HepG2 (cell line): ENCODE measurements at regions of chr4 and their contacts with region 1.

Region 1: DNA sequence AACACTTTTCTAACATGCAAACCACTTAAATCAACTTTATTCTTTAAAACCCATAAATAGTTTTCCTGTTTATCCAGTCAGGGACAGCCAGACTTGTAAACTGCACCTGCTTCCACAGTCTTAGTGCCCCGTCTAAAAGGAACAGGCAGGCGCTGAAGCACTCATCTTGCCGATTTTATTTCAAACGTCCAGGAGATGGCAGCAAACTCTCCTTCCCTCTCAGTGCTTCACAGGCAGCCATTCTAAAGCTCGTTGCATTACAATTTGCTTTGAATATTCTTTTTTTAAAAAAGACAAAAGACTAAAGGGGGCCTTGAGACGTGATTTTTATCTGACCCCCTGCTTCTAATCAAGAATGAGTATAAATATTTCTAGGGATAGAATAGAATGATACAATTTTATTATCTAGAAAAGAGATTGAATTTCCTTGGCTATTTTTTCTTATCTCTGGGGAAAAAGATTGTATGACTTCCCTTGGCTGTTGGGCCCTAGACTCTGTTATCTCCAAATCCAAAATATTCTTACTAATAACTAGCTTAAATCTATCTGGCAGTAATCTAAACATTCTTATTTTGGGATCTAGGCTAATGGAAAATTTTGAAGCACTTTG is 93.6 kb upstream of the MYOZ2 start:
- DNase-seq: peak; percentile 66
- ATAC-seq: peak; percentile 96
- H3K4me3 ChIP-seq: no peak overlapping the region
- H3K27ac ChIP-seq: no peak overlapping the region
- H3K4me1 ChIP-seq: no peaks in the 10 kb centered on the region
- H3K27me3 ChIP-seq: 0 out of 5 replicates have a peak, but pooled peaks cover 0 to 4% of the 10 kb centered on the region in 2 experiments
- CTCF ChIP-seq: peak; percentile 80
- EP300 ChIP-seq: no peak
- POLR2A ChIP-seq: no peak
- RAD21 ChIP-seq: peak; percentile 66

Region 2: DNA sequence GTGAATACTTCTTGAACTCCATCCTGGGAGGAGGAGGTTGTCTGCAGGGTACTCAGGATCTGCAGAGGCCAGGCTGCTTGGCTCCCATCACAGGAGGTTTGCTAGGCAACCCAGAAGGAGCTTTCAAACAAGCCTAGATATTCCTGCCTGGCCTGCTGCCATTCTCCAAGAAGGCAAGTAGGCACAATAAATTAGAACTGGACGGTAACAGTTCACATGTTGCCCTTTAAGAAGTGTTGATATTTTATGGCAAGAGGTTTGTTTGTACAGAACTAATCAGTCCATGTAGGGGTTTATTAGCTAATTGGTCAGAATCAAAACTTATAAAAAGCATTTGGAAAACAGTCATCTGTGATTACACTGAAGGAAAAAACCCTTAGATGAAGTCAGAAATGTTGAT is 114.1 kb before region 1 on chr4:
- CTCF ChIA-PET with region 1: no interaction called
- POLR2A ChIA-PET with region 1: no interaction called
- in situ Hi-C with region 1: no loop called
- intact Hi-C with region 1: no loop called
- DNase-seq: no peak
- ATAC-seq: no peak
- H3K4me3 ChIP-seq: no peak overlapping the region
- H3K27ac ChIP-seq: no peak overlapping the region
- H3K4me1 ChIP-seq: no peaks in the 10 kb centered on the region
- H3K27me3 ChIP-seq: no peaks in the 10 kb centered on the region
- CTCF ChIP-seq: no peak
- EP300 ChIP-seq: no peak
- POLR2A ChIP-seq: no peak
- RAD21 ChIP-seq: no peak

Region 3: DNA sequence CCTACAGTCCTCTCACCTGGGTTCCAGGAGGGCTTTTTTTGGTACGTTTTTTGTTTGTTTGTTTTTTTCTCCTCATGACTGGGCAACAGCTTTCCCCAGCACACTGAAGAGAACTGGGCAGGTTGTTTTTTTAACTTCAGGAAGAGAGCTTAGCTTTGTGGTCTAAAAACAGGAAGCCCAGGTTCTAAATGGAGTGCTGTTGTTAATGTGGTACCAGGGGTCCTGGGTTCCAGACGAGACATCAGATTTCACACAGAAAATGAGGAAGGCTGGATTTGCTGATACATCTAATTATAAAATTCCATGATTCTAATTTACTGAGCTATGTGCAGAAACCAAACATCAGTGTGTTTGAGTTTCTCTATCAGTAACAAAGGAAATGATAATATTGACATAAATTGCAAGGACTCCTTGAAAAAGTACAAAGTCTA is 97.8 kb after region 1 on chr4:
- CTCF ChIA-PET with region 1: no interaction called
- POLR2A ChIA-PET with region 1: no interaction called
- in situ Hi-C with region 1: no loop called
- intact Hi-C with region 1: loop called (anchors 10 kb)
- DNase-seq: no peak
- ATAC-seq: peak; percentile 38
- H3K4me3 ChIP-seq: peak overlapping the region in 2 of 3 experiments; percentile 8 to 18; a peak in 2 of 6 replicates
- H3K27ac ChIP-seq: no peak overlapping the region
- H3K4me1 ChIP-seq: peaks cover 26% of the 10 kb centered on the region
- H3K27me3 ChIP-seq: no peaks in the 10 kb centered on the region
- CTCF ChIP-seq: no peak
- EP300 ChIP-seq: no peak
- POLR2A ChIP-seq: no peak
- RAD21 ChIP-seq: no peak

Region 4: DNA sequence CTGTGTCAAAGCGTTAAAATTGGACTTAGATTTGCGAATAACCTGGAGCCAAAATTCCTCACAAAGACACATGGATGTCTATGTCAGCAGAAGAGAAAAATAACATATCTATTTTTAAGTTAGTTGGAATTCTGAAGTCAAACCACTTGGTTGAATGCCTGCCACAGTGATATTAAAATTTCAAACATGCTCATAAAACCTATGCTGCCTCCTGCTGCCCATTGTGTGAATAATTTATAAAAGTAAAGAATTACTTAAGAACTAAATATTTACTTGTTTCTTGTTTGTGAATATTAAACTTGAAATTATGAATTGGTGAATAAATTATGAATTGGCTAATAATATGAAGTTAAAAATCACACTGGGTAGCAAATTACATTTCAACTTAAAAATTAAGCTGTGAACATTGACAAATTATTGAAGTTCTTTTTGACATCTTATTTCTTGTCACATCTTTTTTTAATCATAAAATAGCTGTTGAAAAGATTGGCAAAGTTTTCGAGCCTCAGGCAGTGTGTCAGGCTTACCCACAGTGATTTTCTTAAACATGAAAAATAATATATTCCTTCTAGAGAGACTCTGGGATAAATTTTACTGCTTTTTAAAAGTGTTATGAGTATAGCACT is 244.4 kb after region 1 on chr4:
- CTCF ChIA-PET with region 1: interaction called, 15 read pairs
- POLR2A ChIA-PET with region 1: no interaction called
- in situ Hi-C with region 1: loop called (anchors 5 kb)
- intact Hi-C with region 1: loop called (anchors 1 kb)
- DNase-seq: peak; percentile 32
- ATAC-seq: no peak
- H3K4me3 ChIP-seq: no peak overlapping the region
- H3K27ac ChIP-seq: no peak overlapping the region
- H3K4me1 ChIP-seq: peaks cover 9% of the 10 kb centered on the region
- H3K27me3 ChIP-seq: no peaks in the 10 kb centered on the region
- CTCF ChIP-seq: peak; percentile 27
- EP300 ChIP-seq: no peak
- POLR2A ChIP-seq: no peak
- RAD21 ChIP-seq: no peak; the same call in 1 of the 2 replicates